ENCODE measurements at regions of chr7 and their contacts with region 1.

Region 1: DNA sequence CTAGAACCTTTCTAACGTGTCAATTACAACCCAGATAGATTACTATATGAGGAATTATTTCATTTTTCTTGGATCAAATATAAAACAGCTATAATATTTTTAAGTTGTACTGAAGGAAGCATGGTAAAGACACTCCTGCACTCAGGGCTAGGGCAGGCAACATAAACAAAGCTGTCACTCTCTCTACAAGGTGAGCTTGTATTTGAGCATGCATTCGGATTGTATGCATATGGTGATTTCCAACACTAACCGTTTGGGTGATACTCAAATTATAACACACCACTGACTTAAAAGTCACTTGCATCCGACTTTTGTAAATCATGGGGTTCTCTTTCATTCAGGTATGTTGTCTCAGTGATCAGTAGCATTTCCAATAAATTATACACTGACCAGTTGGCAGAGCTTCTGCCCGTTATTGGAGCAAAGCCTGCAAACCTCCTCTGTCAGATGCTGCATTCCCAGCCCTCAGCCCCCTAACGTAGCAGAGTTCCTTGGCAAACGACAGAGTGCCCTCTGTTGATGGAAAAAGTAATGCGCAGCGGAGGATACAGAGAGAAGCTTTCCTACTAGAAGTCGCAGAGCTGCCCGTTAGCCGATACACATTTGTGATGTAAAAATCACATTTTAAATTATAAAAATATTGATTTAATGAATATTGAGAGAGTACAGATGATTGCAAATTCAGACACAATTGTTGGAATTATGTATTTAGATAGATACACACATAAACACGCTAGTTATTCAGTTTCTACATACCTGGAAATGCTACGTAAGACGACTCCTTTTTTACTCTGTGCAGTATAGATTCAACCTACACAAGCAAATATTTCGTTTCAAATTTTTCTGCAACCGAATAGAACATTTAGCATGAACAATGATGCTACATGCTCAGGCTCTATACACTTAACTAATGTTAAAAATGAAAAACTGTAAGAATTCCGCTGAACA is 173.9 kb upstream of the SP4 start:
- DNase-seq: peak in 1 of 2 donors; percentile 10
- ATAC-seq: peak in 3 of 8 donors; percentile 44 to 61 (median 58)
- H3K4me3 ChIP-seq: no peak overlapping the region
- H3K27ac ChIP-seq: no peak overlapping the region
- H3K4me1 ChIP-seq: no peaks in the 10 kb centered on the region
- H3K27me3 ChIP-seq: peaks cover 0 to 92% (median 69%) of the 10 kb centered on the region in 7 donors
- CTCF ChIP-seq: peak; percentile 14 to 64 (median 48)

Region 2: DNA sequence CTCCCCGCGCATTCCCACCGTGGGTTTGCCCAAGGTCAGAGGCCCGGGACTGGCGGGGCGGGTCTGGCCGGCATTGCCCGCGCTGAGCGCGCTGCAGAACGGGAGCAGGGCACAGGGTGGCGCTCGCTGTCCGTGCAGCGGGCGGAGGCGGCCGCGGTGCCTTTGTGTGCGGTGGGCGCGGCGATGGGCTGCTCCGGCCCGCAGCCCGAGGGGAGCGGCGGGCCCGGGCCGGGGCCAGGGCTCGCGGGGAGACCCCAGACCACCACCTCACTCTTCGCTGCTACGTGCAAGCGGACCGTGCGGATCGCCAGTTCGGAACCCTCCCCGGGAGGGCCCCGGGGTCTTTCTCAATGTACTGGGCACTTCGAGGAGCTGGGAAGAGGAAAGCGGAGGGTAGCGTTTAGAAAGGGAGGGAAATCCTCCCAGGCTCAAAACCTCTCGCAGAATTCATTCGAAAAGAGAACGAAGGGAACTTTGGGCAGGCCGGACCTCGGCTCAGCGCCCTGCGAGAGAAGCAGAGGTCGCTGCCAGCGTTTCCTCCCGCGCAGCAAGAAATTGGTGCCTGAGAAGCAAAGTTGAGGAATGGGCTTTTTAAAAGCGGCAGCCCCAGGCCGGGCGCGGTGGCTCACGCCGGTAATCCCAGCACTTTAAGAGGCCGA is 475.8 kb before region 1 on chr7:
- intact Hi-C with region 1: loop called in 5 of 10 experiments (anchors 2 to 10 kb)
- DNase-seq: peak in 1 of 2 donors; percentile 26
- ATAC-seq: peak; percentile 57 to 93 (median 86)
- H3K4me3 ChIP-seq: peak overlapping the region in 8 of 10 donors; percentile 11 to 35 (median 25)
- H3K27ac ChIP-seq: no peak overlapping the region
- H3K4me1 ChIP-seq: peaks cover 0 to 13% (median 8%) of the 10 kb centered on the region in 9 donors
- H3K27me3 ChIP-seq: peaks cover 17 to 100% (median 100%) of the 10 kb centered on the region in 7 donors
- CTCF ChIP-seq: peak in 8 of 9 donors; percentile 21 to 66 (median 53)

Region 3: DNA sequence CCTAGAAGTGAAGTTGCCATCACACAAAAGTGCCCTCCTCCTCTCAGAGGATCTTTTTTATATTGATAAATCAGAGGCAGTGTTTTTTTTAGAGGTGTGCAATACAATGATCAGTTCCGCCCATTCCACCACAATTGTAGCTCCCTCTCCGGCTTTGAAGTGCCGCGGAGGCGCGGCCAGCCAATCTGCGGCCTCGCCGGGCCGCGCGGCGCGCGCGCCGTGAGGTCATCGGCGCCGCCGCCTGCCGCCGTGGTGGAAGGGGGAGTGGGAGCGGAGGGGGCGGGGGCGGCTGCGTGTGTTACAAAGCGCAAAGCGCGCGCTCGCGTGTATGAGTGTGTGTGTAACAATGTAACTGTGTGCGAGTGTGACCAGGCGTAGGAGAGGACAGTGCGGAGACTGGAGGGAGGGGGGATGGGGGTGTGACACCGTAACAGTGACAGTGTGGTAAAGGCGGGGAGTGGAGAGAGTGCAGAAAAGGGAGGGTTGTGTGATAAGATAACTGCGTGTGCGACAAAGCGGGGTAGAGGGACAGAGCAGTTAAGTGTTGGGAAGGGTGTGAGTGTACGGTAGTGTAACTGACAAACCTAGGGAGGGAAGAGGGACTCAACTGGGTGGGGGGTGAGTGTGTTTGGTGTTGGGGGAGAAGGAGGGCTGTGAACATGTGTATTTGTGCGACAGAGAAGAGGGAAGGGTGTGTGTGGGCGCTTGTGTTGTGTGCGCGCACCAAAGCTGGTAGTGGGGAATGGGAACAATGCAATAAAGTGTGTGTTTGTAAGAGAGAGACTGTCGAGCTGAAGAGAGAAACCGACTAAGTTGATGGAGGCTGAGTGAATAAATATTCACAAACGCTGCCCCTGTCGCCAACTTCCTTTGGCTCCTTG is 467.0 kb before region 1 on chr7 and contains the start of gene SP8:
- intact Hi-C with region 1: loop called in 3 of 10 experiments (anchors 5 to 10 kb)
- DNase-seq: peak in 1 of 2 donors; percentile 11
- ATAC-seq: peak in 2 of 8 donors; percentile 17 to 63
- H3K4me3 ChIP-seq: peak within 1 kb of the TSS in 8 of 10 donors; percentile 18 to 38 (median 28)
- H3K27ac ChIP-seq: no peak within 1 kb of the TSS
- H3K4me1 ChIP-seq: peaks cover 0 to 46% (median 28%) of the 10 kb centered on the region in 9 donors
- H3K27me3 ChIP-seq: peaks cover 32 to 100% (median 100%) of the 10 kb centered on the region in 7 donors
- CTCF ChIP-seq: no peak
- total RNA-seq, gene SP8: not detected

Region 4: GRCh38 chr7:21507626-21508343 is 253.8 kb after region 1 on chr7:
- intact Hi-C with region 1: loop called in 5 of 10 experiments (anchors 5 kb)
- DNase-seq: peak in 1 of 2 donors; percentile 16
- ATAC-seq: peak in 5 of 8 donors; percentile 51 to 69 (median 53)
- H3K4me3 ChIP-seq: no peak overlapping the region
- H3K27ac ChIP-seq: no peak overlapping the region
- H3K4me1 ChIP-seq: no peaks in the 10 kb centered on the region
- H3K27me3 ChIP-seq: no peaks in the 10 kb centered on the region
- CTCF ChIP-seq: peak; percentile 53 to 74 (median 70)

Region 5: GRCh38 chr7:21767300-21767900 is 513.4 kb after region 1 on chr7:
- intact Hi-C with region 1: loop called in 3 of 10 experiments (anchors 5 to 10 kb)
- DNase-seq: peak; percentile 13 to 27
- ATAC-seq: peak in 7 of 8 donors; percentile 34 to 91 (median 83)
- H3K4me3 ChIP-seq: no peak overlapping the region
- H3K27ac ChIP-seq: no peak overlapping the region
- H3K4me1 ChIP-seq: peaks cover 0 to 9% (median 0%) of the 10 kb centered on the region in 9 donors
- H3K27me3 ChIP-seq: peaks cover 0 to 4% (median 0%) of the 10 kb centered on the region in 7 donors
- CTCF ChIP-seq: peak in 8 of 9 donors; percentile 17 to 62 (median 48)

Region 6: DNA sequence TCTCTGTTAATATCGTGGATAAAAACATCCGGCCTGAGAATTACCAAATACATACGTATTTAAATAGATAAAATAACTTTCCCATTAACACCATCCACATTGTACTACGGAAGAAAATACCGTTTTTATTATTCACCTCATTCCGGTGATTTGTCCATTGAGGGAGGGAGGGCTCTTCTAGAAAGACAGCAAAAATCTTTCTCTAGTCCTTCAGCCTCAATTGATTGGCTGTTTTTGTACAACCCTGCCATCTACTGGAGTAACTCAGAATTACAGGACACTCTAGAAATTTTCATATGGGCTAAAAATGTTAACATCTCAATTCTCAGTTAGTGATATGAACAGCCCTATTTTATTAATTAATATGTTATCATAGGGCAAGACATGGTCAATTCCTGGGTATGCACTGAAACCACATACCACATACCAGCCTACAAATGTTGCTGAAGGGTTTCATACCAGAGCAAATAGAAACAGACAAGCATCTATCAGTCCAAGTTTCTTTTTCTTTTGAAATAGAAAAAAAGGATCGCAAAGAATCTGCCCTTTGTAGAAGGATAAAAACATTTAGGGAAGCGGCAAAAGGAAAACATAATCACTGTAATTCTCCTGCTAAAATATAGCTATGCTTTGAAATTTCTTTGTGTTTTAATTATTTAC is 747.5 kb after region 1 on chr7:
- intact Hi-C with region 1: loop called in 6 of 10 experiments (anchors 10 kb)
- DNase-seq: peak in 1 of 2 donors; percentile 28
- ATAC-seq: peak in 4 of 8 donors; percentile 47 to 63 (median 56)
- H3K4me3 ChIP-seq: peak overlapping the region in 2 of 10 donors; percentile 2 to 28
- H3K27ac ChIP-seq: no peak overlapping the region
- H3K4me1 ChIP-seq: peaks cover 0 to 5% (median 0%) of the 10 kb centered on the region in 9 donors
- H3K27me3 ChIP-seq: peaks cover 0 to 19% (median under 1%) of the 10 kb centered on the region in 7 donors
- CTCF ChIP-seq: peak; percentile 62 to 87 (median 82)